ENCODE measurements at regions of chr5 and their contacts with region 1.

Region 1: DNA sequence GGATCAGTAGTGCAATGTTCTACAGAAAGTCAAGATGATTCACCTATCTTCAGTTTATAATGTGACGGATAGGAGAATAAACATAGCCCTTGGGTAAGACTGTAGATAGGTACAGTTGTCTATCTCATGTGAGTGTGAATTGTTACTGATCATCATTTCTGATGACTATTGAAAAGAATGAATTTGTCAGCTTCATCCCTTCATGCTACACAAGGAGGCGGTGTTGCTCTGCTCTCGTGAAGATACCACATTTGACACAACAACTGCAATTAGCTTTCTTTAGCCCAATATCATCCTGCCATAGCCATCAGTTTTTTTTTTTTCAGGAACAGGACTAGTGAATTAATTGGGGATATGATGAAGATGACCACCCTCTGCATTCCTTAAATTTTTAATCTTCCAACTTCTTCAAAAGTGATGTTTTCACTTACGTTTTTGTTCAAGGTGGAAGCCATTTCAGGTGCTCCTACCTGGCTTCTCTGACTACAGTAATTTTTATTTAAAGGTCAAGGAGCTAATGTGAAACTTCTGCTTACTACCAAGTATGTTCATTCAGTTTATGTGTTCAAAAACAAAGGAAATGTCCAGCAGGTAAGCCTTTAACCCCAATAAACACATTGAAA is 152.9 kb upstream of the MOCS2 start:
- DNase-seq: no peak
- H3K4me3 ChIP-seq: no peak overlapping the region
- H3K27ac ChIP-seq: no peak overlapping the region
- H3K4me1 ChIP-seq: no peaks in the 10 kb centered on the region
- H3K27me3 ChIP-seq: no peaks in the 10 kb centered on the region
- CTCF ChIP-seq: peak in 2 of 3 experiments; percentile 63 to 75; a peak in 3 of 4 replicates
- EP300 ChIP-seq: no peak
- POLR2A ChIP-seq: no peak
- RAD21 ChIP-seq: peak; percentile 88 to 89

Region 2: GRCh38 chr5:53249529-53250200 is 12.8 kb before region 1 on chr5:
- CTCF ChIA-PET with region 1: interaction called, 11 read pairs
- POLR2A ChIA-PET with region 1: no interaction called
- DNase-seq: no peak
- H3K4me3 ChIP-seq: no peak overlapping the region
- H3K27ac ChIP-seq: no peak overlapping the region
- H3K4me1 ChIP-seq: no peaks in the 10 kb centered on the region
- H3K27me3 ChIP-seq: no peaks in the 10 kb centered on the region
- CTCF ChIP-seq: no peak
- EP300 ChIP-seq: no peak
- POLR2A ChIP-seq: no peak
- RAD21 ChIP-seq: no peak

Region 3: DNA sequence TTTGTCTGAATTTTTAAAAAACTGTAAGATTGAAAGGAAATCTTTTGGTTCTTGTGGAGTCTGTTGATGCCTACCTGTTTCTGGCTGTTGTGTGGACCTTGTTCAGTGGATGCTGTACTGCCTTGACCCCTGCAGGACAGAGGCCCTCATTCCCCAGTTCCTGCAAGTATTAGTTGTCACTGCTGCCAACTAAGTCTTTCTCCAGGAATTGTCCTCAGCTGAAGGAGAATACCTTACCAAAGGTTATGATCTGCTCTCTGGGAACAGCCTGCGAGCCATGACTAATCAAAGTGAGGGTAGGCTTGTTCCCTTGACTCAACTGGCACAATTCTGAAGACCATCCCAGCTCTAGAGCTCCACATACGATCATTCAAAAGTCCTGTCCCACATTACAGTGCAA is 72.7 kb after region 1 on chr5:
- CTCF ChIA-PET with region 1: interaction called, 10 read pairs
- POLR2A ChIA-PET with region 1: no interaction called
- DNase-seq: no peak
- H3K4me3 ChIP-seq: no peak overlapping the region
- H3K27ac ChIP-seq: no peak overlapping the region
- H3K4me1 ChIP-seq: no peaks in the 10 kb centered on the region
- H3K27me3 ChIP-seq: no peaks in the 10 kb centered on the region
- CTCF ChIP-seq: peak; percentile 52 to 70 (median 54); a peak in 3 of 4 replicates
- EP300 ChIP-seq: no peak
- POLR2A ChIP-seq: no peak
- RAD21 ChIP-seq: peak; percentile 61 to 69

Region 4: DNA sequence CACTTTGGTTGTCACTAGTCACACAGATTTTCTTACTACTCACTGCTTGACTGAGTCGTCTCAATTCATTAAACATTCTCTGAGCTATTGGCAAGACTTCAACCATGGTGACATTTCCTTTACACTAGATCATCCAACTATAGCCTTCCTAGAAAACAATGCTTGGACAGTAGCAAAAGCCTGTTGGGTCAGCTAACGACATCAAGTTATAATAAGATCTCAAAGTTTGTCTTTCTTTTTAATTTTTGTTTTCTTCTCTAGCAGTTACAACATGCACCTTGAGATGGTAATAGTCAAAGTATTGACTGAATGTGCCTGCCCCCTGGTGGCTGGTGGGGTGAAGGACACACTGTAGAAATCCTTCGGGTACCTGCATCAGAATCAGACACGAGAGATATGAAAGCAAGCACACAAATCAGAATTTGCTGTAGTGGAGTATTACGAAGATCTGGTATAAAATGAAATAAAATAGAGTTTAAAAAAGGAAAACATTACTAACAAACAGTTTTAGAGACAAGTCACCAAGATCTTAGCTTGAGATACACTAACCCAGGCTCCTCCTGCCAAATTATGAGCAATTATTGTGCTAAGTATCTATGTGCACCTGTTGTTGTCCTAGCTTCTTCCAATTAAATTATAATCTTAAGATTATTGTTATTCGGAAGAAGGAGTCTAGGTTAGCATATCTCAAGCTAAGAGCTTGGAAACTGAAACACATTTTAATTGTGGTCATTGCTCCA is 966.8 kb after region 1 on chr5:
- CTCF ChIA-PET with region 1: interaction called, 14 read pairs
- POLR2A ChIA-PET with region 1: no interaction called
- DNase-seq: peak in 1 of 2 experiments; percentile 86
- H3K4me3 ChIP-seq: no peak overlapping the region
- H3K27ac ChIP-seq: no peak overlapping the region
- H3K4me1 ChIP-seq: no peaks in the 10 kb centered on the region
- H3K27me3 ChIP-seq: no peaks in the 10 kb centered on the region
- CTCF ChIP-seq: peak; percentile 71 to 80 (median 79)
- EP300 ChIP-seq: no peak
- POLR2A ChIP-seq: no peak
- RAD21 ChIP-seq: peak; percentile 80